Right ventricle myocardium inferior (tissue), 1 donor: ENCODE measurements at regions of chr19 and their contacts with region 1.

Region 1: DNA sequence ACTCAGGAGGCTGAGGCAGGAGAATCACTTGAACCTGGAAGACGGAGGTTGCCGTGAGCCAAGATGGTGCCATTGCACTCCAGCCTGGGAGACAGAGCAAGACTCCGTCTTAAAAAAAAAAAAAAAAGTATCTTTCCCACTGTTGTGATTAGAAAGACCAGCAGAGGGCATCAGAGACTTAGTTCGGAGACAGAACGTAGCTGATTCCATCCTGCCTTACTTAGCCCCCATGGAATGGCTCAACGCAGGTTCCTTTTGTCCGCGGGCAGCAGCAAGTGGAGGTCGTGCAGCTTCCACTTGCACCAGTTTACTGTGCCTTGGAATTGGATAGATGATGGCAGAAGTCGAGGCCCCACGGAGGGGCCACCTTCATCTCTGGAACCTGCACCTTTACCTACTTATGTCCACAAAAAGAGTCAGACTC is 8.1 kb downstream of the TIMM29 start:
- DNase-seq: no peak
- ATAC-seq: peak; percentile 70

Region 2: GRCh38 chr19:10979951-10980381 is 43.3 kb after region 1 on chr19:
- intact Hi-C with region 1: loop called (anchors 5 kb)
- DNase-seq: no peak
- ATAC-seq: no peak

Region 3: DNA sequence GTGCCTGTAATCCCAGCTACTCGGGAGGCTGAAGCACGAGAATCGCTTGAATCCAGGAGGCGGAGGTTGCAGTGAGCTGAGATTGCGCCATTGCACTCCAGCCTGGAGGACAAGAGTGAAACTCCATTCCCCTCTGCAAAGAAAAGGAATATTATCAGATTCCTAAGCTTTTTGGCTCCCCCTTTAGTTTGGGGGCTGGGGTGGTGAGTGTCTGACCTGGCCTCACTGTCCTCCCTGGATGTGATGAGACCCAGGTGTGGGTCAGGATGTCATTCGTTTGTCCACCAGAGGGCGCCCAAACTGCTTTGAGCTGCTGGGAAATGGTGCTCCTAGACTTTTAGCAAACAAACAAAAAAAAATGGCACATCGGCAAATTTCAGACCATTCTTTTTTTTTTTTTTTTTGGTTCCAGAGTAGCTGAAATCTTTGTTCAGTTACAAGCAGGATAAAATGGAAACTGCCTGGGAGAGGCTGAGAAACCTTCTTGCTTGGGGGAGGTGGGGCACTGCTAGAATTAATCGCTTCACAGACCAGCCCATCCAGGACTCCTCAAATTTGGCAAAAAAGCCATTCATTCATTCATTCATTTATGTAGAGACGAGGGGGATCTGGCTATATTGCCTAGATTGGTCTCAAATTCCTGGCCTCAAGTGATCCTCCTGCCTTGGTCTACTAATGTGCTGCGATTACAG is 189.5 kb after region 1 on chr19:
- intact Hi-C with region 1: loop called (anchors 5 kb)
- DNase-seq: peak; percentile 78
- ATAC-seq: peak; percentile 69